Heart left ventricle (tissue), 16 donors: ENCODE measurements at regions of chr15 and their contacts with region 1.

Region 1: GRCh38 chr15:53307952-53308621 is 451.4 kb downstream of the WDR72 start:
- DNase-seq: no peak
- ATAC-seq: no peak
- H3K4me3 ChIP-seq: no peak overlapping the region
- H3K27ac ChIP-seq: no peak overlapping the region
- H3K4me1 ChIP-seq: no peaks in the 10 kb centered on the region
- H3K27me3 ChIP-seq: no peaks in the 10 kb centered on the region
- CTCF ChIP-seq: no peak
- POLR2A ChIP-seq: no peak

Region 2: DNA sequence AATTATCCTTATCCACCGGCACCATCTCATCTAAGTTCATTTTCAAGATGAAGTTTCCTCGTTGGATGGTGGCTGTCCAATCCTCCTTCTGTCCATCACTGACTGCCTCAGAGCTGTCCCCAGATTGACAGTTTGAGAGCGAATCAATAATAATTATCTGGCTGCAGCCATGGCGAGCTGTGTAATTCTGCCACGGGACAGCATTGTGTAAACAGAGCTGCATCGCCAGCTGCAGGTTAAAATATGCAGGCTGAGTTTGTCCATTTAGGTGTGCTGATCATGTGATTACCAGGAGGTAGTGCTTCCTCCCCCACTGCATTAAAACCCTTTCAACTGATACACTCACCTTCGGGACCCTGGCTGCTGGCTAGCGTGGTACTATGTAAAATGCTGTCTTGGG is 56.1 kb before region 1 on chr15:
- intact Hi-C with region 1: loop called in 1 of 10 experiments (anchors 10 kb)
- DNase-seq: no peak
- ATAC-seq: no peak
- H3K4me3 ChIP-seq: no peak overlapping the region
- H3K27ac ChIP-seq: no peak overlapping the region
- H3K4me1 ChIP-seq: no peaks in the 10 kb centered on the region
- H3K27me3 ChIP-seq: no peaks in the 10 kb centered on the region
- CTCF ChIP-seq: no peak
- POLR2A ChIP-seq: no peak

Region 3: GRCh38 chr15:53360881-53361280 is 52.8 kb after region 1 on chr15:
- intact Hi-C with region 1: loop called in 1 of 10 experiments (anchors 10 kb)
- DNase-seq: no peak
- ATAC-seq: no peak
- H3K4me3 ChIP-seq: no peak overlapping the region
- H3K27ac ChIP-seq: no peak overlapping the region
- H3K4me1 ChIP-seq: no peaks in the 10 kb centered on the region
- H3K27me3 ChIP-seq: no peaks in the 10 kb centered on the region
- CTCF ChIP-seq: no peak
- POLR2A ChIP-seq: no peak